Activated CD8-positive, alpha-beta T cell treated with anti-CD3 and anti-CD28 coated beads for 36 hours (primary cell): ENCODE measurements at regions of chr11 and their contacts with region 1.

Region 1: DNA sequence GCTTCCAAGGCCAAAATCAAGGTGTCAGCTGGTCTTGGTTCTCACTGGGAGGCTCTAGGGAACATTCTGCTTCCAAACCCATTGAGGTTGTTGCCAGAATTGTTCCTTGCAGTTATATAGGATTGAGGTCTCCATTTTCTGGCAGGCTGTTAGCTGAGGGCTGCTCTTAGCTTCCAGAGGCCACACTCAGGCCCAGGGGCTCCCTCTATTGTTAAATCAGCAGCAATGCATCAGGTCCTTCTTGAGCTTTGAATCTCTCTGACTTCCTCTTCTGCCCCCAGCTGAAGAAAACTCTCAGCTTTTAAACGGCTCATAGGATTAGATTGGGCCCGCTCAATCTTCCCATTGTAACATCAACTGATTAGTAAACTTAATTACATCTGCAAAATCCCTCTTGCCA is 39.3 kb upstream of the BSX start:
- DNase-seq: peak; percentile 52
- ATAC-seq: peak; percentile 86
- H3K4me3 Mint-ChIP-seq: no peak overlapping the region
- H3K27ac Mint-ChIP-seq: no peak overlapping the region
- H3K4me1 Mint-ChIP-seq: peaks cover 8% of the 10 kb centered on the region
- H3K27me3 Mint-ChIP-seq: peaks cover 3% of the 10 kb centered on the region
- CTCF ChIP-seq: peak; percentile 61

Region 2: DNA sequence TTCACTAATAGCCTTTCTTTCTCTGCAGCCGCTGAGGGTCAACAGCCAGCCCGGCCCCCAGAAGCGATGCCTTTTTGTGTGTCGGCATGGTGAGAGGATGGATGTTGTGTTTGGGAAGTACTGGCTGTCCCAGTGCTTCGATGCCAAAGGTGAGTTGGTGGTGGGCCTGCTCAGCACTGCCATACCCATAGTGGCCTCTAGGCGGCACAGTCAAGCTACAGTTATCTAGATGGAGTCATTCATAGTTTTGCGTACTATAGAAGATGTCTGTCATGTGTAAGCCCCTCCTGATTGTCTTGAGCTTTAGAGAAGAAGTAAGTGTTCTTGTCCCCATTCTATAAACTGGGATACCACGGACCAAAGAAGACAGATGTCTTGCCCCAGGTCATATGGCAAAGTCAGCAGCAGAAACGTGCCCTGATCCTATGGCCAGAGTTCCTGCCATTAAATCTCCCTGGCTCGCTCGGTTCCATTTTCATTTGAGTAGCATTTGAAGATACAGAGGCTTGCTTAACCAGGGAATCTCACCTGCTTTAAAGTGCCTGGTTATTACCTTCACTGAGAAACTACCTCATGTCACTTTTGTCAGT is 224.7 kb before region 1 on chr11:
- CTCF ChIA-PET with region 1: interaction called, 20 read pairs
- POLR2A ChIA-PET with region 1: no interaction called
- intact Hi-C with region 1: no loop called
- DNase-seq: peak; percentile 88
- ATAC-seq: peak; percentile 100
- H3K4me3 Mint-ChIP-seq: no peak overlapping the region
- H3K27ac Mint-ChIP-seq: no peak overlapping the region
- H3K4me1 Mint-ChIP-seq: peaks cover 2% of the 10 kb centered on the region
- H3K27me3 Mint-ChIP-seq: no peaks in the 10 kb centered on the region
- CTCF ChIP-seq: peak; percentile 95

Region 3: GRCh38 chr11:122882857-122883645 is 137.9 kb before region 1 on chr11:
- CTCF ChIA-PET with region 1: interaction called, 12 read pairs
- POLR2A ChIA-PET with region 1: no interaction called
- intact Hi-C with region 1: no loop called
- DNase-seq: peak; percentile 57
- ATAC-seq: peak; percentile 71
- H3K4me3 Mint-ChIP-seq: peak overlapping the region; percentile 81
- H3K27ac Mint-ChIP-seq: peak overlapping the region; percentile 85
- H3K4me1 Mint-ChIP-seq: peaks cover 27% of the 10 kb centered on the region
- H3K27me3 Mint-ChIP-seq: no peaks in the 10 kb centered on the region
- CTCF ChIP-seq: no peak

Region 4: DNA sequence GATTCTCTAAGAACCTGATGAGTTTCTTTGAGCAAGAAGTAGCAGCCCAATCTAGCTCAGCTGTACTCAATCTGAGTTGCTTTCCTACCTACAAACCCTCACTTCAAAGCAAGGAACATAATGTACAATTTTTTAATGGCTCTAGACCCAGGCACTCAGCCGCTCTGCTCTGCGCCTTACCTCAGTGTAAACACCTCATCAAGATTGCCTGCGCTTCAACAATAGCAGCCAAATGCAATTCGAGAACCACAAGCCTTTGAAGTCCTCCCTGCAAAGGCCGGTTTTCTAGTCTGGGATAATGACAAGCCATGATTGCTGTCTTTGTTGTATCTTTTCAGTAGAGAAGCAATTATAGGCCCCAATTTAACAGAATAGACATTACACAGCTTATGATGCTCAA is 100.4 kb before region 1 on chr11:
- CTCF ChIA-PET with region 1: interaction called, 18 read pairs
- POLR2A ChIA-PET with region 1: no interaction called
- intact Hi-C with region 1: no loop called
- DNase-seq: no peak
- ATAC-seq: no peak
- H3K4me3 Mint-ChIP-seq: no peak overlapping the region
- H3K27ac Mint-ChIP-seq: no peak overlapping the region
- H3K4me1 Mint-ChIP-seq: no peaks in the 10 kb centered on the region
- H3K27me3 Mint-ChIP-seq: no peaks in the 10 kb centered on the region
- CTCF ChIP-seq: no peak

Region 5: DNA sequence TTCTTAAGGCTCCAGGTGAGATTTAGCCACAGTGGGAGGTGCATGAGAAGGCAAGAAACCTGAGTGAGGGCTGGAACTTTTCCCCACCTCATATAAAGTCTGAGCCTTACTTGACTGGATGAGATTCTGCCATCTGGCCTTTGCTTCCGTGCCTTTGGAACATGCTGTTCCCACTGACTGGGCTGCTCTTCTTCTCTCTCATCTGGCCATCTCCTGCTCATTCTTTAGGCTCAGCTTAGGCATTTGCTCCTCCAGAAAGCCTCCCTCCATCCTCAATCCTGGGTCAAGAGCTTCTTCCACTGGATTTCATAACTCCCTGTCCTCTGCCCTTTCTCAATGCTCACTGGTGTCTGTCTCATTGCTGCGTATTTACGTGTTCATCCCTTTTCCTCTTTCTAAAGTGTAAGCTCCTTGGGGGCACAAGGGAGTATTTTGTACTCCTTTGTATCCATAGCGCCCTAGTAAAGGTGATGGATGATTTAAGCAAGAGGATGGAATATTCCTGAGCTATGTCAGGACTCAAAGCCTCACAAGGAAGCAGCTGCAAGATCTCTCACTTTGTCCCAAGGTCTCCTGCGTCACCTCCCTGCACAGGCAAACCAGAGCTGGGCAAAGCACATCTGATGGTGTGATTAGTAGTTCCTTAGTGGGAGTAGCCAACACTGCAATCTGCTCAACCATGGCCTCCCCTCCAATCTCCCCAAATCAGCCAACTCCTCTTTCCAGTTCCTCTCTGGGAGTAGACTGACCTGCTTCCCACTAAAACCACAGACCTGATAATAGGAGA is 25.7 kb after region 1 on chr11:
- CTCF ChIA-PET with region 1: interaction called, 10 read pairs
- POLR2A ChIA-PET with region 1: no interaction called
- intact Hi-C with region 1: no loop called
- DNase-seq: no peak
- ATAC-seq: no peak
- H3K4me3 Mint-ChIP-seq: no peak overlapping the region
- H3K27ac Mint-ChIP-seq: no peak overlapping the region
- H3K4me1 Mint-ChIP-seq: no peaks in the 10 kb centered on the region
- H3K27me3 Mint-ChIP-seq: no peaks in the 10 kb centered on the region
- CTCF ChIP-seq: no peak

Region 6: GRCh38 chr11:123072332-123072761 is 51.4 kb after region 1 on chr11:
- CTCF ChIA-PET with region 1: no interaction called
- POLR2A ChIA-PET with region 1: no interaction called
- intact Hi-C with region 1: no loop called
- DNase-seq: no peak
- ATAC-seq: no peak
- H3K4me3 Mint-ChIP-seq: no peak overlapping the region
- H3K27ac Mint-ChIP-seq: peak overlapping the region; percentile 10
- H3K4me1 Mint-ChIP-seq: peaks cover 54% of the 10 kb centered on the region
- H3K27me3 Mint-ChIP-seq: no peaks in the 10 kb centered on the region
- CTCF ChIP-seq: no peak

Region 7: DNA sequence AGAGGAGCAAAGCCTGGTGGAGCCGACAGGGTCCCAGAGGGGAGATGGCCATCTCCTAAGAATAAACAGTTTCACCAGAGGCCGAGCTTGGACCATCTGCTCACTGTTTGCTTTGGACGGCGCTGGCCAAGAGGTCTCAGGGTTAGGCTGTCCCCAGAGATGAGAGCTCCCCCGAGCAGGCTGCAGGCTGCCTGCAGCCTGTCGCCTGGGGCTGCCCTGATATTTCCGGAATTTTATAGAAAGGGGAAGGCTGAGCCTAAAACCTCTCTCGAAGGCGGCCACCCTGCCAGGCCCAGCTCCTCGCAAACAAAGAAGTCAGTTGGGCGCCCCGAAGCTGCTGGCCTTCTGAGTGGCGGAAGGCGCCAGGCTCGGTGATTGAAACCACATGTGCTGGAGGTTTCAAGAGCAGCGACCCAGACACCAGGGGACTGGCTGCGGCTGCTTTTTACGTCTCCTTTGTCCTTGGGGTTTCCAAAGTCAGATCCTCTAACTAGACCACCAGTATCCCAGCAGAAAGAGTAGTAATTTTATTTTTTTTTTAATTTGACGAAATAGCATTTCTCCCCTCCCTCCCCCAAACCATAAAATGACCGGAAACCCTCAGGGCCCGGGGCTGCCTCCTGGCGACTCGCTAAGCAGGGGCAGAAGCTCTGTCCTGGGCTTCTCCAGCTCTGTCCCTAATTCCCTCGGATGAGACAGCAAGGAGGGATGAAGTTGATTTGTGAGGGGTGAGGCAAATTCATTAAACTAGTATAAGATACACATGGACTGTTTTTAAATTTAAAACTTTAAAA is 116.7 kb after region 1 on chr11:
- CTCF ChIA-PET with region 1: no interaction called
- POLR2A ChIA-PET with region 1: no interaction called
- intact Hi-C with region 1: no loop called
- DNase-seq: no peak
- ATAC-seq: no peak
- H3K4me3 Mint-ChIP-seq: no peak overlapping the region
- H3K27ac Mint-ChIP-seq: no peak overlapping the region
- H3K4me1 Mint-ChIP-seq: no peaks in the 10 kb centered on the region
- H3K27me3 Mint-ChIP-seq: no peaks in the 10 kb centered on the region
- CTCF ChIP-seq: no peak

Region 8: DNA sequence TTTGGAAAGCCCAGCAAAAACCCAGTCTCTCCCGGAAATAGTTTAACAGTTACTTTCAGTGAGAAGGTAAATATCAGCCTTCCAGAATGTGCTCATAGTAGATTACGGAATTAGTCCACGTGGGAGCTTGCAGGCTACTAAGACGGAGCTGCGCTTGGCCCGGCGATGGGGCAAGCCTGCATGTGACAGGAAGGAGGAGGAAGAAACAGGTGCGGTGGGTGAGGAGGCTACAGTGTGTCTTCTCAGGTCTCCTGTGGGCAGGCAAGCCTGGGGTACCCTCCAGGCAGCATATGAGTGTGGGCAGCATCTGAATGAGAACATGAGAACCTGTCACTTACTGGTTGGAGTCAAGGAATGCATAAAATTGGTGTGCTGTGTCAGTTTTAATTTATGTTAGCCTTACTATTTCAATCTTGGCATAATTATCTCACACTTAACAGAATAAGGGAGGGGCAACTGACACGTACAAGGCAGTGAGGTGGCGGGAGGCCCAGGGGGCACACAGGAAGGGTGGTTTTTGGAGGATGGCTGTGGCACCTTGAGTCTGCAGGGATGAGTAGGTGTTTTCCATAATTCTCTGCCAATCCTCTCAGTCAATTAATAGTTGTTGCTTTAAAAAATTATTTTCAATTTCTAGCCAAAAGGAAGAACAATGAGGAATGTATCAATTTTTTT is 138.4 kb after region 1 on chr11:
- CTCF ChIA-PET with region 1: no interaction called
- POLR2A ChIA-PET with region 1: no interaction called
- intact Hi-C with region 1: no loop called
- DNase-seq: peak; percentile 72
- ATAC-seq: peak; percentile 88
- H3K4me3 Mint-ChIP-seq: no peak overlapping the region
- H3K27ac Mint-ChIP-seq: peak overlapping the region; percentile 68
- H3K4me1 Mint-ChIP-seq: peaks cover 17% of the 10 kb centered on the region
- H3K27me3 Mint-ChIP-seq: peaks cover 1% of the 10 kb centered on the region
- CTCF ChIP-seq: no peak